Activated CD4-positive, alpha-beta memory T cell treated with anti-CD3 and anti-CD28 coated beads for 36 hours (primary cell): ENCODE measurements at regions of chr17 and their contacts with region 1.

Region 1: DNA sequence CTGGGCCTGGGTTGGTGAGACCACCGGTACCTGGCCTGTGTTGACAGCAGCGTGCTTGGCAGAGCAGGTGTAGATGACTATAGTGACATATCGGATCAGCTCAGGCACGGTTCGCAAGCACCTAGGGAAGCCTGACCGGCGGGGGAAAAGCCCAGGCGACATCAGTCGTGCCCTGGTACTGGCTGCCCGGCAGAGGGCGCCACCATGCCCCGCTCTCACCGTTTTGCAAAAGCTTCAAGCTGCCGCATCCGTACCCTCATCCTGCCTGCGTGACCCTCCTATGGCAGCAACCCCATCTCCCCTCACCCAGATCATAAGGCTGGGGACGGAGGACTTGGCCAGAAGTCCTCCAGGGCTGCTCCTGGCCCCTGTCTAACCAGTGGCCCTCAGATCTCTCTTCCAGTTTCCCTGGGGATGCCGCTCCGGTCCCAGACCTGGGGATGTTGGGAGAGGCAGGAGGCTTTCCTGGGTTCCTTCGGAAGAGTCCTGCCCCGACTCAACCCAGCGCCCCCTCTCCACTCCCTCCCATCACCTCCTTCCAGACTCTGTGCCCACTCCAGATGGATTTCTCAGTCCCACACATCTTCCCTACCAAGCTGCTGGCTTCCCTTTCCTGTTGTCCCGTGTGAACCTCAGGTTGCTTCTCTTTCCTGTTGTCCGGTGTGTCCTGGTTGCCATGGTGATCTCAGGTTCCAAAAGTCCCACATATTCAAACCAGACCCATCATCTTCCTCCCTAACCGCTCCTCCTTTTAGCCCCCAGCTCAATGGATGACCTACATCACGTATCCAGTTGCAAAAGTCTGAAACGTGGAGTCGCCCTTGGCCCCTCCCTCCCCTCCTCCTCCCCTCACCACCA is 13.7 kb downstream of the ALOX12B start:
- DNase-seq: peak; percentile 91
- H3K4me3 Mint-ChIP-seq: peak overlapping the region; percentile 70
- H3K27ac Mint-ChIP-seq: no peak overlapping the region
- H3K4me1 Mint-ChIP-seq: peaks cover 18% of the 10 kb centered on the region
- H3K27me3 Mint-ChIP-seq: peaks cover 40% of the 10 kb centered on the region

Region 2: DNA sequence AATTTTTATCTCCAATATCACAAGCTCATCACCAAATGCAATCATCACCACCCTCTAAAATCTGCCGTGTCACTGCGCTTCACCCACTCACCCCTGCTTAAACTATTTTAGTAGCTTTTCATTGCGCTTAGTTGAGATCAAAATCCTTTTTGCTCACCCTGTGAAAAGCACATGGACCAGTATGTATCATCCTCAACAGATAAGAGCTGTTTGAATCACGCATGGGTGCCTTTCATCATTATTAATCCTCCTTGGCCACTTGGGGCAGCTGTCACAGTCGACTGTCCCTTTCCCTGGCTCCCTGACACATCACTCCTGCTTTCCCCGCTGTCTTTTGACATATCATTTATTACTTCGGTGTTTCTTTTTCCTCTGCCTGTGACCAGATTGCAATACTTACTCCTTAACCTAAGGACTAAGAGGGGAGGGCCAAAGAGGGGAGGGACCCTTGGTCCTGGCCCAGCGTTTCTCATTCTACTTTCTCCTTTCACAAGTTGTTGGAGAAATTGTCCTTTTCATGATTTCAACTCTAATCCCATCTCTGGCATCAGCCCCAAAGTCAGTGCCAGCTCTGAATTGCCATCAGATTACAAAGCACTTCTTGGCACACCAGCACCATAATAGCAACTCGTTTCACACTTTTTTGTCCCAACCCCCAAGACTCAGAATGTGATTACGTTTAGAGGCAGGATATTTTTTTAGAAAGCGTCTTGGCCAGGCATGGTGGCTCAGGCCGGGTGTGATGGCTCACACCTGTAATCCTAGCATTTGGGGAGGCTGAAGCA is 248.5 kb before region 1 on chr17:
- CTCF ChIA-PET with region 1: no interaction called
- POLR2A ChIA-PET with region 1: no interaction called
- intact Hi-C with region 1: no loop called
- DNase-seq: no peak
- H3K4me3 Mint-ChIP-seq: no peak overlapping the region
- H3K27ac Mint-ChIP-seq: no peak overlapping the region
- H3K4me1 Mint-ChIP-seq: no peaks in the 10 kb centered on the region
- H3K27me3 Mint-ChIP-seq: peaks cover 1% of the 10 kb centered on the region

Region 3: DNA sequence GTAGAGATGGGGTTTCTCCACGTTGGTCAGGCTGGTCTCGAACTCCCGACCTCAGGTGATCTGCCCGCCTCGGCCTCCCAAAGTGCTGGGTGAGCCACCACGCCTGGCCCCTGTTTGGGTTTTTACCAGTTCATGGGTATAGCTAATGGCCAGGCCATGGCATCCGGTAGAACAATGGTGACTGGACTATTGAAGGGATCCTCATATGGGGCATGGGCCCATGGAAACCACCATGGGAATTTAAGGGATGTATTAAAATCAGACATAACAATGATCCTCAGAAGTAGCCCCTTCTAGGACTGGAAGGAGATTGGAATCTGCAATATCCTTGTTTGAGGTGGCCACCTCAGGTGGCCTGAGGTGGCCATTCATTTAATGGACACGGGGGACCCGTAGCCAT is 89.0 kb before region 1 on chr17:
- CTCF ChIA-PET with region 1: no interaction called
- POLR2A ChIA-PET with region 1: no interaction called
- intact Hi-C with region 1: no loop called
- DNase-seq: no peak
- H3K4me3 Mint-ChIP-seq: no peak overlapping the region
- H3K27ac Mint-ChIP-seq: no peak overlapping the region
- H3K4me1 Mint-ChIP-seq: peaks cover 11% of the 10 kb centered on the region
- H3K27me3 Mint-ChIP-seq: peaks cover 11% of the 10 kb centered on the region

Region 4: DNA sequence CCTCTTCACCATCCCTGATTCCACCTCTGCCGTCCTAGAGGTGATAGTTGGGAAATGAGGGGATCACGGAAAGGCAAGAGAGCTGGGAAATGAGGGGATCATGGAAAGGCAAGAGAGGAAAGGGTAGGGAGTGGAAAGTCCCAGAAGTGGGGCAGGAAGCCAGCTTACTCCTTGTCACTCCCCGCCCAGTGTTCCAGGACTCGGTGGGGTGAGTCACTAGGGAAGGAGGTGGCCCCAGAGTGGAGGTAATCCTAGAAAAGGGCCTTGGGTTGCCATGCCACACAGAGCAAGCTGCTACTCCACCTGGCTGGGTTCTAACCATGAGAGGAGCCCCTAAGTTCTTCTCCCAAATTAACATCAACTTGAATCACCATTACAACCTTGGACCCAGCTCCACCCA is 29.7 kb after region 1 on chr17:
- CTCF ChIA-PET with region 1: interaction called, 28 read pairs
- POLR2A ChIA-PET with region 1: no interaction called
- intact Hi-C with region 1: no loop called
- DNase-seq: no peak
- H3K4me3 Mint-ChIP-seq: no peak overlapping the region
- H3K27ac Mint-ChIP-seq: no peak overlapping the region
- H3K4me1 Mint-ChIP-seq: peaks cover 8% of the 10 kb centered on the region
- H3K27me3 Mint-ChIP-seq: no peaks in the 10 kb centered on the region

Region 5: DNA sequence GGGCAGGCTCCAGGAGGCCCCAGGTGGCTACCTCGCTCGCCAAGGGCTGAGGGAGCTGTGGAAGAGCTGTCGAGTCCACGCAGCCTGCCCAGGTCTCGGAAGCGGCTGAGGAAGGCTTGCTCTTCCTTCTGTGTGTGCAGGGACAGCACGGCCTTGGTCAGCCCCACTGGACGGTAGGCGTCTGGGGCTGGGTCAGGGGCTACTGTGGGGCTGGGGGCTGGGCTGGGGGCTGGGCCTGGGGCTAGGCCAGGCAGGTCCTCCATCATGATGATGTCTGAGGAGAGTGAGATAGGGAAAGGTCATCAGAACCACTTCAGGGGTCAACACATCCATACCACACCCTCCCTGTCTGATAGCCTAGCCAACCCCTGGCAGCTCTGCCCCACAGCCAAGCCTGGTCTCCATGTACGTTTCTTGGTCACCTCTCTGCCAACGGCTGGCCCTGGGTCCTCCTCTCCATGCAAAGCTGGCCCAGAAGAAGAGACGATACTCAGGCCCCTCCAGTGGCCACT is 70.9 kb after region 1 on chr17:
- CTCF ChIA-PET with region 1: no interaction called
- POLR2A ChIA-PET with region 1: no interaction called
- intact Hi-C with region 1: no loop called
- DNase-seq: no peak
- H3K4me3 Mint-ChIP-seq: no peak overlapping the region
- H3K27ac Mint-ChIP-seq: no peak overlapping the region
- H3K4me1 Mint-ChIP-seq: no peaks in the 10 kb centered on the region
- H3K27me3 Mint-ChIP-seq: no peaks in the 10 kb centered on the region

Region 6: GRCh38 chr17:8212312-8213180 is 138.7 kb after region 1 on chr17:
- CTCF ChIA-PET with region 1: no interaction called
- POLR2A ChIA-PET with region 1: no interaction called
- intact Hi-C with region 1: no loop called
- DNase-seq: no peak
- H3K4me3 Mint-ChIP-seq: no peak overlapping the region
- H3K27ac Mint-ChIP-seq: no peak overlapping the region
- H3K4me1 Mint-ChIP-seq: peaks cover 18% of the 10 kb centered on the region
- H3K27me3 Mint-ChIP-seq: no peaks in the 10 kb centered on the region